A549 (cell line): ENCODE measurements at regions of chr11 and their contacts with region 1.

Region 1: GRCh38 chr11:45843118-45843924 is 4.0 kb upstream of the CRY2 start:
- DNase-seq: peak; percentile 88 to 91
- ATAC-seq: peak; percentile 61 to 73
- H3K4me3 ChIP-seq: peak overlapping the region; percentile 32; the same call in 2 of the 3 replicates
- H3K27ac ChIP-seq: no peak overlapping the region; a peak in 1 of 6 replicates
- H3K4me1 ChIP-seq: peaks cover 15% of the 10 kb centered on the region
- CTCF ChIP-seq: peak; percentile 87
- EP300 ChIP-seq: no peak
- POLR2A ChIP-seq: no peak
- RAD21 ChIP-seq: peak; percentile 52 to 59; a peak in 4 of 5 replicates

Region 2: DNA sequence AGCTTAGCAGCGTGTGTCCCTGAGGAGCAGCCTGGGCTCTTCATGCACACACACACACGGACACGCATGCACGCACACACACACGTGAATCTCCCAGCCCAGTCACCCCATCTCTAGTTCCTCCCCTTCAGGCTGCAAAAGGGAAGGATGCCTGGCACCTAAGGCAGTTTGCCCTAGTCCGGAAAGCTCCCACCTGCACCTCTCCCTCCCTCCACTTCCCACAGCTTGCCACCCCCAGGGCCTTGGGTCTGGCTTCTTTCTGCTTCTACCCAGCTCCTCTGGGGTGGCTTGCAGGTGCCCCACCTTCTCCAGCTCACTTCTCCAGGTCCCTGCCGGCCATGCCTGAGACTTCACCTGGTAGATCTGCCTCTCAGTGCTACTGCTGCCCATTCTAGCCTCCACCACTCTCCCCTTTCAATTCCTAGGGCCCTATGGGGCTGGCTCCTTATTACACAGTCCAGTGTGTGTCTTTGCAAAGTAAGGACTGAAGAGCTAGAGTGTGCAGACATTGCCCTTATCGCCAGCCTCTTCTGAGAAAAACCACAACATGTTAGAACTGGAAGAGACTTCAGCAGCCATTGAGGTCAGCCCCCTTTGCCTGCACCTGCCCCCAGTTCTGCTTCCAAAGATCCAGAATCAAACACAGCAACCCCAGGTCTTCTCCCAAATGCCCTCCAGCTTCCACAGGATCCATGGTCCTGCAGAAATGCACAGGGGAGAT is 144.4 kb before region 1 on chr11:
- CTCF ChIA-PET with region 1: no interaction called
- POLR2A ChIA-PET with region 1: no interaction called
- DNase-seq: no peak
- ATAC-seq: no peak
- H3K4me3 ChIP-seq: no peak overlapping the region
- H3K27ac ChIP-seq: no peak overlapping the region
- H3K4me1 ChIP-seq: no peaks in the 10 kb centered on the region
- CTCF ChIP-seq: no peak
- EP300 ChIP-seq: no peak
- POLR2A ChIP-seq: no peak
- RAD21 ChIP-seq: no peak

Region 3: DNA sequence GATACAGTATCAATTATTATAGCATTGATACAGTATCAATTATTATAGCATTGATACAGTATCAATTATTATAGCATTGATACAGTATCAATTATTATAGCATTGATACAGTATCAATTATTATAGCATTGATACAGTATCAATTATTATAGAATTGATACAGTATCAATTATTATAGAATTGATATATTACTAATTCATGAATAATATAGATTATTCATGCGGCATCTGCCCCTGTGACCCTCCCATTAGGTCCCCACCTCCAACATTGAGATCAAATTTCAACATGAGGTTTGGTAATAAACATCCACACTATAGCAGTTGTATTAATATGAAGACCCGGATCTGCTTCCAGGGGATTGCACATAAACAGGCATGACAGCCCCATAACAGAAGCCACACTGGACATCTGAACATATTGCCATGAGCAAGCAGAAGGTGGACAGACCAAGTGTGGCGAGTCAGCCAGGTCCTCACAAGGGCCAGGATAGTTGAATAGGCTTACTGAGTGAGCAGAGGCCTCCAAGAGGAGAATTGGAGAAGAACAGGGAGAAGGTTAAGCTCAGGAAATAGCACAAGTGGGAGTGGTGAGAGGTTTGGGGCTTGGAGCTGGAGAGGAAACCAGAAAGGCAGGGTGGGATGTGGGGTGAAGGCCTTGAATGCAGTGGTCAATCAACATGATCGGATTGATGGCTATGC is 27.7 kb before region 1 on chr11:
- CTCF ChIA-PET with region 1: interaction called, 32 read pairs
- POLR2A ChIA-PET with region 1: interaction called, 3 read pairs
- DNase-seq: peak; percentile 58 to 62
- ATAC-seq: peak; percentile 83 to 88
- H3K4me3 ChIP-seq: no peak overlapping the region
- H3K27ac ChIP-seq: no peak overlapping the region
- H3K4me1 ChIP-seq: no peaks in the 10 kb centered on the region
- CTCF ChIP-seq: no peak
- EP300 ChIP-seq: no peak
- POLR2A ChIP-seq: no peak
- RAD21 ChIP-seq: no peak

Region 4: DNA sequence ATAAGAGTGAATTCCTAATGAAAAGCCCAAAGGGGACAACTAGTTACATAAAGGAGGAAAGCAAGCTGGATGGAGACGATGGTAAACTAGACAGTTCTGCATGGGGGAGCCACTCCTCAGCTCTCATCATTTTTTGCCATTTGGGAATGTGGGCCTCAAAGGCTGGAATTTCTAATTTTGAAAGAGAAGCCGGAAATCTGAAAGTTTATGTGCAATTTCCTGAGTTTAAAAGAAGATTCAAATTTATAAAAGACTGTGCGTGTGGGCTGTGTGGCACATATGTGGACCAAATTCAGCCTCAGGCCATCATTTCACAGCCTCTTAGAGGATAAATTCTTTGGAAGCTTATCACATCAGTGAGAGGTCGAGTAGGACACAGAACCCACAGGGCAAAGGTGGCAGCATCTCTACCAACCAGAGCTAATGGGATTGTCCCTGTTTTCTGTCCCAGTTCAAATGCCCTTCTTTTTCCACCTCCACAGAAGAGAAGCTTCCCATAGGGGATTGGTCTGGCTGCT is 14.3 kb before region 1 on chr11:
- CTCF ChIA-PET with region 1: interaction called, 25 read pairs
- POLR2A ChIA-PET with region 1: interaction called, 3 read pairs
- DNase-seq: no peak
- ATAC-seq: no peak
- H3K4me3 ChIP-seq: no peak overlapping the region
- H3K27ac ChIP-seq: no peak overlapping the region
- H3K4me1 ChIP-seq: no peaks in the 10 kb centered on the region
- CTCF ChIP-seq: no peak
- EP300 ChIP-seq: no peak
- POLR2A ChIP-seq: no peak
- RAD21 ChIP-seq: no peak

Region 5: DNA sequence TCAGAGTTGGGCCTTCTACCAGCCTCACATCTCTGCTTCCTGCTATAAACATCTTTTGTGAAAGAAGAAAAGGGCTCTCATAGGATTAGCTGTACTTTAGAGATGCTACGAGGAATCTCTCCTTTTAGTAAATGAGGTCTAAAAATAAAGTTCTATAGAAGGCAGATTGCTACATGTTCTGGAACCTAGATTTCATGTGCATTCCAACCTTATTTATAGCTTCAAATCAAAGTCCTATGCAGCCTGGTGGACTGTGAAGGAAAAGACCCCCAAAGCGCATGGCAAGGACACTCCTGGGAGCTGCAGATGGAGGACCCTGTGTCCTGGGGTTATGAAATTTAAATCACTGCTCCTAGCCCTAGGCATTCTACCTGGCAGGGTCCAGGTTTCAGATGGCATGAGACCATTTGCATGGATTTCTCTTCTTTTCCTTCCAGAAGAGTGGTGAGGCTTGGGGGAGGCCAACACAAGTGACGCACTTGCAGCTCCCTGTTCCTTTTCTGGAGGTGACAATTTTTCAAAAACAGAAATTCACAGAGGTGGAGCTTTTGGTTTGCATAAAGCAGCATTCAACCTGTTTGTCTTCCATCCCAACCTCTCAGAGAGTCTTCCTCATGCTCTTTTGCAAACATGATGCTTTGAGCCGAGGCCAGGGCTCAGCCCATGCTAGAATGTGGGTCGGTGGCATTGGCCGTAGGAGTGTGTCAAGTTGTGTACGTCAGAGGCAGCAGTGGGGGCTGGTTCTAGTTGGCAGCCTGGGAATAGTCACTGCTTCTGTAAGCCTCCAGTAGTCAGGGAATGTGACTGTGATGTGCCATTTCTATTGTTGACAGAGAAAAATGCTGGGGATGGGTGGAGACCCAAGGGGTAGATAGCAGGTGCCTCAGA is 10.3 kb after region 1 on chr11:
- CTCF ChIA-PET with region 1: interaction called, 10 read pairs
- POLR2A ChIA-PET with region 1: interaction called, 4 read pairs
- DNase-seq: no peak
- ATAC-seq: no peak
- H3K4me3 ChIP-seq: no peak overlapping the region
- H3K27ac ChIP-seq: no peak overlapping the region
- H3K4me1 ChIP-seq: peaks cover 2% of the 10 kb centered on the region; the same call in 2 of the 3 replicates
- CTCF ChIP-seq: no peak
- EP300 ChIP-seq: no peak
- POLR2A ChIP-seq: no peak
- RAD21 ChIP-seq: no peak

Region 6: DNA sequence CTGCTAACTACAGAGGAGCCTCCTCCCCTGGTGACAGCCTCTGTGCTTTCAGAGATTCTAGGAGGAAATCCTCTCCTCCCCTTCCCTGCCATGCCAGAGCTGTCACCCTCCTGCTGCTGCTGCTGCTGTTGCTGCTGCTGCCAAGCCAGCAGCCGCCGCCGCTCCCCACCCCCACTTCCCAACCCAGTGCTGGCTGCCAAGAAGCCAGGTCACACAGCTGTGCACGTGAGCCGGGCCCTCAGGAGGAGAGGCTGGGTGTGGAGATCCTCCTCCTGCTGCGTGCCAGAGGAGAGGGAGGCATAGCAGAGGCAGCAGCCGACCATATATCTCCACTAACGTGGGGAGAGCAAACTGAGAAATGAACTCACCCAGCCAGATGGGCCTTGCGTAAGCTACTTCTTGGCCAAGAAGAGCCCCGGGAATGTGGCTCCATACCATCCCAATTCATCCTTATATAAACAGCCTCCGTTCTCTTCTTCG is 16.4 kb after region 1 on chr11:
- CTCF ChIA-PET with region 1: interaction called, 10 read pairs
- POLR2A ChIA-PET with region 1: interaction called, 4 read pairs
- DNase-seq: no peak
- ATAC-seq: no peak
- H3K4me3 ChIP-seq: no peak overlapping the region
- H3K27ac ChIP-seq: no peak overlapping the region
- H3K4me1 ChIP-seq: no peaks in the 10 kb centered on the region
- CTCF ChIP-seq: no peak
- EP300 ChIP-seq: no peak
- POLR2A ChIP-seq: no peak
- RAD21 ChIP-seq: no peak